ENCODE measurements at regions of chr14 and their contacts with region 1.

Region 1: GRCh38 chr14:52918486-52918885 is 32.4 kb downstream of the FERMT2 start:
- DNase-seq: peak in 7 of 9 donors; percentile 55 to 81 (median 75)
- ATAC-seq: peak; percentile 99
- H3K4me3 ChIP-seq: no peak overlapping the region
- H3K4me3 Mint-ChIP-seq: peak overlapping the region in 3 of 10 donors; percentile 1 to 26 (median 22)
- H3K27ac ChIP-seq: peak overlapping the region; percentile 55
- H3K27ac Mint-ChIP-seq: peak overlapping the region; percentile 65 to 93 (median 81)
- H3K4me1 ChIP-seq: peaks cover 18 to 20% of the 10 kb centered on the region in 2 donors
- H3K4me1 Mint-ChIP-seq: peaks cover 15 to 37% (median 30%) of the 10 kb centered on the region in 7 donors
- H3K27me3 ChIP-seq: no peaks in the 10 kb centered on the region
- H3K27me3 Mint-ChIP-seq: peaks cover 0 to 2% (median 0%) of the 10 kb centered on the region in 5 donors

Region 2: GRCh38 chr14:52755607-52756253 is 162.8 kb before region 1 on chr14:
- CTCF ChIA-PET with region 1: no interaction called
- POLR2A ChIA-PET with region 1: no interaction called
- intact Hi-C with region 1: no loop called
- DNase-seq: no peak
- ATAC-seq: no peak
- H3K4me3 ChIP-seq: no peak overlapping the region
- H3K4me3 Mint-ChIP-seq: no peak overlapping the region
- H3K27ac ChIP-seq: no peak overlapping the region
- H3K27ac Mint-ChIP-seq: peak overlapping the region in 2 of 9 donors; percentile 28 to 42
- H3K4me1 ChIP-seq: no peaks in the 10 kb centered on the region
- H3K4me1 Mint-ChIP-seq: peaks cover 0 to 11% (median 0%) of the 10 kb centered on the region in 7 donors
- H3K27me3 ChIP-seq: no peaks in the 10 kb centered on the region
- H3K27me3 Mint-ChIP-seq: no peaks in the 10 kb centered on the region

Region 3: DNA sequence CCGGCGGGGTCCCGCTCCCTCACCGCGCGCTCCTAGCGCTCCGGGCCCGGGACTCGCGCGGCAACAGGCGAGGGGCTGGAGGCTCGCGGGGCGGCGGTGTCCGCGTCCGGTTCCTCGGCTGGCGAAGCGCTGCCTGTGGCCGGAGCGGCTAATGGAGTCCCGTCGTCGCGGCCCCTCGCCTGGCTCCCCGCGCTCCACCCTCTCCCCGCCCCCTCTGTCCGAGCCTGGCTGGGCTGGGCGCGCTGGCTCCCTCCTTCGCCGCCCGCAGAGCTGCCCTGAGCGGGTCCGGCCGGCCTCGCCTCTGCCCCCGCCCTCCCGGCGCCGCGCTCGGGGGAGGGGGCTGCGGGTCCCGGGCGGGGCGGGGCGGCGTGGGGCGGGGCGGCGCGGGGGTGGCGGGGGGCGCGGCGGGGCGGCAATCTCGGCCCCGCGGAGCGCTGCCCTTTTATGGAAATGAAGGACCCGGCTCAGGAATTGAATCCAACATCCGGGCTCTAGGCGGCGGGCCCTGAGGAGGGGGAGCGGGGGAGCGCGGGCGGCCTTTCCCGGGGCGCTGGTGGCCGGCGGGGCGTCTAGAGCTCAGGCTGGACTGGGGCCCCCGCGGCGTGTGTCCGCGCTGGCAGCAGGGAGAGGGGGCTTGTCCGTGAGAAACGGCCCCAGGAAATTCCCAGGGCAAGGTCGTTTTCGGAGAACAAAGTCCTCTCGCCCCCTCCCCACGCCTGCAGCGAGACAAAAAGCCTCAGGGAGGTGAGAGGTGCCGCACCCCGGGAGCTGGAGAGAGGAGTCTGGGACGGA is 32.6 kb after region 1 on chr14 and contains the start of gene FERMT2:
- CTCF ChIA-PET with region 1: no interaction called
- POLR2A ChIA-PET with region 1: interaction called, 3 read pairs
- intact Hi-C with region 1: loop called (anchors 1 to 5 kb)
- DNase-seq: peak in 5 of 9 donors; percentile 2 to 49 (median 12)
- ATAC-seq: peak; percentile 51
- H3K4me3 ChIP-seq: peak within 1 kb of the TSS; percentile 67
- H3K4me3 Mint-ChIP-seq: peak within 1 kb of the TSS; percentile 66 to 93 (median 86)
- H3K27ac ChIP-seq: no peak within 1 kb of the TSS
- H3K27ac Mint-ChIP-seq: peak within 1 kb of the TSS in 3 of 9 donors; percentile 14 to 76 (median 33)
- H3K4me1 ChIP-seq: peaks cover 13 to 18% of the 10 kb centered on the region in 2 donors
- H3K4me1 Mint-ChIP-seq: peaks cover 12 to 24% (median 20%) of the 10 kb centered on the region in 7 donors
- H3K27me3 ChIP-seq: peaks cover 32% of the 10 kb centered on the region in 2 donors
- H3K27me3 Mint-ChIP-seq: peaks cover 51 to 73% (median 53%) of the 10 kb centered on the region in 5 donors
- total RNA-seq, gene FERMT2: 0.13 to 0.58 (median 0.33) TPM in 4 of 5 experiments, not detected in the other

Region 4: DNA sequence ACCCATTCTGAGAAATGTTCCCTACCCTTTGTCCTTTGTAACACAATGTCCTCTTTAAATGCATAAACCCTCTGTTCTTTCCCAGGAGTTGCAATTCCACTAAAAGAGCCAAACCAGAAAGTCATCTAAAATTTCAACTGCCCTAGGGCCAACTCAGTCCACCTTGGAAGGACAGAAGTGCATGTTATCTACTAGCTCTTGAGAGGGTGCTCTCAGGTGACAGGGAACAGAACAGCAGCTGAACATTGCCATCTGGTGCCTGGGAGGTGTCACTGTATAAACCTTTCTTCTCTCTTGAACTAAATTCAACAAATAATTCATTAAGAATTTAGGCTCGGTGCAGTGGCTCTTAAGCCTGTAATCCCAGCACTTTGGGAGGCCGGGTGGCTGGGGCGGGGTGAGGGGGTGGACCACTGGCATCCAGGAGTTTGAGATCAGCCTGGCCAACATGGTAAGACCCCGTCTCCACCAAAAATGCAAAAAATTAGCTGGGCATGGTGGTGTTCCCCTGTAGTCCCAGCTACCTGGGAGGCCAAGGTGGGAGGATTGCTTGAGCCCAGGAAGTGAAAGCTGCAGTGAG is 42.7 kb after region 1 on chr14:
- CTCF ChIA-PET with region 1: interaction called, 7 read pairs
- POLR2A ChIA-PET with region 1: no interaction called
- intact Hi-C with region 1: loop called in 1 of 2 experiments (anchors 2 kb)
- DNase-seq: peak in 7 of 9 donors; percentile 35 to 63 (median 50)
- ATAC-seq: peak; percentile 84
- H3K4me3 ChIP-seq: no peak overlapping the region
- H3K4me3 Mint-ChIP-seq: no peak overlapping the region
- H3K27ac ChIP-seq: no peak overlapping the region
- H3K27ac Mint-ChIP-seq: peak overlapping the region in 1 of 9 donors; percentile 62
- H3K4me1 ChIP-seq: peaks cover 0 to 3% of the 10 kb centered on the region in 2 donors
- H3K4me1 Mint-ChIP-seq: peaks cover 0 to 7% (median 4%) of the 10 kb centered on the region in 7 donors
- H3K27me3 ChIP-seq: no peaks in the 10 kb centered on the region
- H3K27me3 Mint-ChIP-seq: peaks cover 0 to 5% (median 0%) of the 10 kb centered on the region in 5 donors

Region 5: GRCh38 chr14:53055003-53055402 is 136.5 kb after region 1 on chr14:
- CTCF ChIA-PET with region 1: no interaction called
- POLR2A ChIA-PET with region 1: no interaction called
- intact Hi-C with region 1: loop called in 1 of 2 experiments (anchors 10 kb)
- DNase-seq: peak in 7 of 9 donors; percentile 8 to 47 (median 30)
- ATAC-seq: peak; percentile 76
- H3K4me3 ChIP-seq: no peak overlapping the region
- H3K4me3 Mint-ChIP-seq: no peak overlapping the region
- H3K27ac ChIP-seq: no peak overlapping the region
- H3K27ac Mint-ChIP-seq: peak overlapping the region in 3 of 9 donors; percentile 11 to 40 (median 19)
- H3K4me1 ChIP-seq: no peaks in the 10 kb centered on the region
- H3K4me1 Mint-ChIP-seq: peaks cover 0 to 11% (median 4%) of the 10 kb centered on the region in 7 donors
- H3K27me3 ChIP-seq: no peaks in the 10 kb centered on the region
- H3K27me3 Mint-ChIP-seq: no peaks in the 10 kb centered on the region